ENCODE measurements at regions of chr10 and their contacts with region 1.

Region 1: DNA sequence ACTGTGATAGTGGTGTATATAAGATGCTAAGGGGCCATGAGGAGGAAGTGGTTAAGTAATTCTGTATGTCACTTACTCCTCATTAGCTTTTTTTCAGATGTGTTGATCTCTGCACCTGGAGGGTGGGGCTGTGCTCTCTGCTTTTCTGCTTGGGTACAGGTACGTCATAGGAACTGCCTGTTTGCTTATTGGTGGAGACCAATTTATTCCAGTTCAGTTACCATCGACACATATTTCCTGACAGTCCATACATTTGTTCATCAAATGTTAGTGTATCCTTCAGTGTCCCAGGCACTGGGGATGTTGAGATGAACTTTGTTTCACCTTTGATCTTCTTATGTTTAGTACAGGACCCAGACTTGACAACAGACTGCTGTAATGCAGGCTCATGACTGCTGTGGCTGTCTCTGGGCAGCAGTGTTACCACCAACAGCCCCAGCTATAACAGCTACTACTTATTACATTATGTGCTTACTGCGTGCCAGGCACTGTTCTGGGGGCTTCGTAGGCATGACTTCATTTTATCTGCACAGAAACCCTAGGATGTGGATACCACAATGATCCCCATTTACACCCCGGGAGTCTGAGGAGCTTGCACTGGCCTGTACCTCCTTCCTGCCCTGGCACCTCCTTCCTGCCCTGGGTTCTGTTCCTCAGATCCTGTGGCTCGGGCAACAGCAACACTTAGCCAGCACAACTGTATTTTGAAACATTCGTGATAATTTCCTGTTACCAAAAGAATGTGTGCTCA is 87.4 kb downstream of the BUB3 start:
- DNase-seq: peak; percentile 7 to 86 (median 57)
- ATAC-seq: peak; percentile 91
- H3K4me3 ChIP-seq: peak overlapping the region in 1 of 2 experiments; percentile 14
- H3K4me3 Mint-ChIP-seq: peak overlapping the region; percentile 59
- H3K27ac ChIP-seq: peak overlapping the region; percentile 90 to 92
- H3K27ac Mint-ChIP-seq: peak overlapping the region; percentile 99
- H3K4me1 ChIP-seq: peaks cover 24% of the 10 kb centered on the region
- H3K4me1 Mint-ChIP-seq: peaks cover 31% of the 10 kb centered on the region
- H3K27me3 ChIP-seq: no peaks in the 10 kb centered on the region
- H3K27me3 Mint-ChIP-seq: no peaks in the 10 kb centered on the region
- CTCF ChIP-seq: no peak

Region 2: GRCh38 chr10:122980209-122981065 is 261.1 kb before region 1 on chr10 and contains the start of gene PSTK:
- CTCF ChIA-PET with region 1: no interaction called
- POLR2A ChIA-PET with region 1: no interaction called
- intact Hi-C with region 1: loop called in 1 of 2 experiments (anchors 10 kb)
- DNase-seq: peak; percentile 78 to 96 (median 86)
- ATAC-seq: peak; percentile 96
- H3K4me3 ChIP-seq: peak within 1 kb of the TSS; percentile 86 to 93
- H3K4me3 Mint-ChIP-seq: peak within 1 kb of the TSS; percentile 95
- H3K27ac ChIP-seq: peak within 1 kb of the TSS; percentile 96 to 97
- H3K27ac Mint-ChIP-seq: peak within 1 kb of the TSS; percentile 98
- H3K4me1 ChIP-seq: peaks cover 12% of the 10 kb centered on the region
- H3K4me1 Mint-ChIP-seq: peaks cover 19% of the 10 kb centered on the region
- H3K27me3 ChIP-seq: no peaks in the 10 kb centered on the region
- H3K27me3 Mint-ChIP-seq: peaks cover 4% of the 10 kb centered on the region
- CTCF ChIP-seq: peak; percentile 91
- total RNA-seq, gene PSTK: 20.5 to 20.9 TPM

Region 3: GRCh38 chr10:123019941-123020703 is 221.4 kb before region 1 on chr10:
- CTCF ChIA-PET with region 1: no interaction called
- POLR2A ChIA-PET with region 1: no interaction called
- intact Hi-C with region 1: loop called in 1 of 2 experiments (anchors 10 kb)
- DNase-seq: no peak
- ATAC-seq: no peak
- H3K4me3 ChIP-seq: no peak overlapping the region
- H3K4me3 Mint-ChIP-seq: no peak overlapping the region
- H3K27ac ChIP-seq: no peak overlapping the region
- H3K27ac Mint-ChIP-seq: no peak overlapping the region
- H3K4me1 ChIP-seq: no peaks in the 10 kb centered on the region
- H3K4me1 Mint-ChIP-seq: peaks cover 1% of the 10 kb centered on the region
- H3K27me3 ChIP-seq: no peaks in the 10 kb centered on the region
- H3K27me3 Mint-ChIP-seq: no peaks in the 10 kb centered on the region
- CTCF ChIP-seq: no peak

Measured in CD8-positive, alpha-beta T cell (primary cell).